Naive thymus-derived CD4-positive, alpha-beta T cell (primary cell): ENCODE measurements at regions of chr6 and their contacts with region 1.

Region 1: GRCh38 chr6:12289933-12290820 is at the start of gene EDN1:
- DNase-seq: peak in 8 of 9 donors; percentile 16 to 61 (median 40)
- ATAC-seq: peak; percentile 87
- H3K4me3 ChIP-seq: peak within 1 kb of the TSS; percentile 46
- H3K4me3 Mint-ChIP-seq: peak within 1 kb of the TSS; percentile 82 to 96 (median 88)
- H3K27ac ChIP-seq: no peak within 1 kb of the TSS
- H3K27ac Mint-ChIP-seq: peak within 1 kb of the TSS in 1 of 9 donors; percentile 57
- H3K4me1 ChIP-seq: no peaks in the 10 kb centered on the region
- H3K4me1 Mint-ChIP-seq: peaks cover 7 to 22% (median 16%) of the 10 kb centered on the region in 7 donors
- H3K27me3 ChIP-seq: peaks cover 0 to 3% of the 10 kb centered on the region in 2 donors
- H3K27me3 Mint-ChIP-seq: peaks cover 31 to 51% (median 38%) of the 10 kb centered on the region in 5 donors
- total RNA-seq, gene EDN1: 0.17 to 1.7 (median 1.4) TPM

Region 2: DNA sequence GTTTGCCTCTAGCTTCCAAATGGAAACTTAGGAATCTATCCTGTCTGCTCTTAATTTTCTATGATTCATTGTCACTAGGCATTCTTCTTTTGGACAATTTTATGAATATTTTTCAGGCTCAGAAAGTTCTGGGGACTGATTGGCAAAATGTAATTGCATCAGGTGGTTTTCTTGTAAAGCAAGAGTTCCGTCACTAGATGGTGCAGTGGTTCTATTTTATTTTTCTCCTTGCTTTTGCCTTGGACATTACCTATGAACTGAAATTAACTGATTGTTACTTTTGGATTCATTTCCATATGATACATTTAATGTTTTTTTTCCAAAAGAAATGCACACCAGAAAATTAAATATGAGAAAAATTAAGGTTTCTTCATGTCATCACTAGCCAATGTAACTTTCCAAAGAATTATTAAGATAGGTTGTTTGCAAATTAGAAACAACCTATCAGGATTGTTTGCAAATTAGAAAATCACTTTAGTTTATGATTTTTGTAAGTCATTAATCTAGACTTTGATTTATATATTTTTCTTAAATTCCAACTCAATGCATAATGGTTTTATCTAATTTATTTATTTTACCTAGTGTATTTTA is 704.7 kb before region 1 on chr6:
- CTCF ChIA-PET with region 1: no interaction called
- POLR2A ChIA-PET with region 1: no interaction called
- intact Hi-C with region 1: loop called (anchors 1 to 10 kb)
- DNase-seq: peak in 4 of 9 donors; percentile 9 to 23 (median 10)
- ATAC-seq: no peak
- H3K4me3 ChIP-seq: no peak overlapping the region
- H3K4me3 Mint-ChIP-seq: no peak overlapping the region
- H3K27ac ChIP-seq: no peak overlapping the region
- H3K27ac Mint-ChIP-seq: no peak overlapping the region
- H3K4me1 ChIP-seq: no peaks in the 10 kb centered on the region
- H3K4me1 Mint-ChIP-seq: no peaks in the 10 kb centered on the region
- H3K27me3 ChIP-seq: no peaks in the 10 kb centered on the region
- H3K27me3 Mint-ChIP-seq: peaks cover 0 to 19% (median 0%) of the 10 kb centered on the region in 5 donors

Region 3: DNA sequence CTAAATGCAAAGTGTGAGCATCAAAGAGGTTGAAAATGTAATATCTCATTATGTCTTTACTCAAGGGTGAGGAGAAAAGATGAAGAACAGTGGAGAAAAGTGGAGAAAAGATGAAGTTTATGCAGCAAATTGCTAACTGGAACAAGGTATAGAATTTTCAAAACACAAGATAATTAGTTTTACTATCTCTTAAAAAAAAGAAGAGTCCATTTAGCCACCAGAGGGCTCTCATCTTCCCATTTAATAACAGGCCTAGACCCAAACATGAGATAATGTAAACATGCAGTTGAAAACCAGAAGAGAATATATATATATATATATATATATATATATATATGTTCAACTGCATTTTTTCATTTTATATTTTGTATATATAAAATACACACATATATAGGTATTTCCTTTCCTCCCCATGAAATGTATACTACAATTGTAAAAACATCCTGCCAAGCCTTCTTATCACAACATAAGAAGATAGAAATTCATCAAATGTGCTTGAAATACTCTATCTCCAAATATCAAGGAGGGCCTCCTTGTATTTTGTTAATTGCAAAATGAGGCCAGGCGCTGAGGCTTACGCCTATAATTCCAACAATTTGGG is 590.0 kb before region 1 on chr6:
- CTCF ChIA-PET with region 1: interaction called, 3 read pairs
- POLR2A ChIA-PET with region 1: no interaction called
- intact Hi-C with region 1: loop called (anchors 1 kb)
- DNase-seq: peak in 7 of 9 donors; percentile 22 to 63 (median 51)
- ATAC-seq: peak; percentile 60
- H3K4me3 ChIP-seq: no peak overlapping the region
- H3K4me3 Mint-ChIP-seq: no peak overlapping the region
- H3K27ac ChIP-seq: no peak overlapping the region
- H3K27ac Mint-ChIP-seq: peak overlapping the region in 3 of 9 donors; percentile 21 to 66 (median 41)
- H3K4me1 ChIP-seq: peaks cover 0 to 9% of the 10 kb centered on the region in 2 donors
- H3K4me1 Mint-ChIP-seq: peaks cover 10 to 42% (median 35%) of the 10 kb centered on the region in 7 donors
- H3K27me3 ChIP-seq: no peaks in the 10 kb centered on the region
- H3K27me3 Mint-ChIP-seq: no peaks in the 10 kb centered on the region

Region 4: DNA sequence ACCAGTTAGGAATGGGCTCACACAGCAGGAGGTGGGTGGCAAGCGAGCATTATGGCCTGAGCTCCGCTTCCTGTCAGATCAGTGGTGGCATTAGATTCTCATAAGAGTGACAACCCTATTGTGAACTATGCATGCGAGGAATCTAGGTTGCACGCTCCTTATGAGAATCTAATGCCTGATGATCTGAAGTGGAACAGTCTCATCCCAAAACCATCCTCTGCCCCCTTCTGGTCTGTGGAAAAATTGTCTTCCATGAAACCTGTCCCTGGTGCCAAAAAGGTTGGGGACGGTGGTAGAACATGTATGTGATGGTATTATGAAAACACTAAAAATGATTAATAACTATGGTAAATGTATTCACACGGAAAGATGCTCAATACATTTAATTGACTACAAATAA is 377.8 kb before region 1 on chr6:
- CTCF ChIA-PET with region 1: no interaction called
- POLR2A ChIA-PET with region 1: no interaction called
- intact Hi-C with region 1: loop called in 1 of 2 experiments (anchors 5 kb)
- DNase-seq: no peak
- ATAC-seq: no peak
- H3K4me3 ChIP-seq: no peak overlapping the region
- H3K4me3 Mint-ChIP-seq: no peak overlapping the region
- H3K27ac ChIP-seq: no peak overlapping the region
- H3K27ac Mint-ChIP-seq: no peak overlapping the region
- H3K4me1 ChIP-seq: no peaks in the 10 kb centered on the region
- H3K4me1 Mint-ChIP-seq: peaks cover 0 to 3% (median 0%) of the 10 kb centered on the region in 7 donors
- H3K27me3 ChIP-seq: no peaks in the 10 kb centered on the region
- H3K27me3 Mint-ChIP-seq: no peaks in the 10 kb centered on the region

Region 5: DNA sequence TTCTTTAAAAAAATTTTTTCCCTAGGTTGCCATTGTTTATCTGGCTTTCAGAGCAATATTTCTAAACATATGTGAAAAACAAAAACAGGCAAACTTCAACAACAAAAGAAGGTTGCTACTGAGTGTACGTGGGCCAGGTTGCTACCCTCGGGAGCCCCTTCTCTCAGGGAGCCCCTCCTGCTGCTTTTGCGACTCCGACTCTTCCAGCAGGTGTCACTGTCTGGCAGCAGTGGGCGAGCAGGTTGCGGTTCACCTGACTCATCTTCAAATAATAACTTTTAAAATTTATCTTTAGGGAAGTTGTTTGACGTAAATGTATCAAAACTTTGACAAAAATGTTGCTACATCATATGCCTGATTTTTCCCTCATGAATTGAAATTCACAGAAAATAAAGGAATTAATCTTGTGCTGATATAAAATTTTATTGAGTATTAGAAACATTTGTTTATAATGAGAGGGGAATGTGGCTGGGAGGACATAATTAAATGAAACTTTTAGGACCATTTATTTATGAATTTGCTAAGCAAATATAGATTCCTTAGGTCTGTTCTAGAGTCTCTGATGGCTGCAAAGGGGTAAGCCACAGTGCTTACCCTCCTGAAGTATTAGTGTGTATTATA is 139.3 kb before region 1 on chr6:
- CTCF ChIA-PET with region 1: no interaction called
- POLR2A ChIA-PET with region 1: no interaction called
- intact Hi-C with region 1: loop called (anchors 1 kb)
- DNase-seq: peak in 5 of 9 donors; percentile 16 to 45 (median 35)
- ATAC-seq: no peak
- H3K4me3 ChIP-seq: no peak overlapping the region
- H3K4me3 Mint-ChIP-seq: no peak overlapping the region
- H3K27ac ChIP-seq: no peak overlapping the region
- H3K27ac Mint-ChIP-seq: no peak overlapping the region
- H3K4me1 ChIP-seq: no peaks in the 10 kb centered on the region
- H3K4me1 Mint-ChIP-seq: peaks cover 4 to 29% (median 14%) of the 10 kb centered on the region in 7 donors
- H3K27me3 ChIP-seq: no peaks in the 10 kb centered on the region
- H3K27me3 Mint-ChIP-seq: no peaks in the 10 kb centered on the region

Region 6: GRCh38 chr6:12605888-12606345 is 315.7 kb after region 1 on chr6:
- CTCF ChIA-PET with region 1: no interaction called
- POLR2A ChIA-PET with region 1: no interaction called
- intact Hi-C with region 1: loop called (anchors 1 to 5 kb)
- DNase-seq: peak in 5 of 9 donors; percentile 11 to 50 (median 27)
- ATAC-seq: peak; percentile 75
- H3K4me3 ChIP-seq: no peak overlapping the region
- H3K4me3 Mint-ChIP-seq: peak overlapping the region in 1 of 10 donors; percentile 49
- H3K27ac ChIP-seq: no peak overlapping the region
- H3K27ac Mint-ChIP-seq: no peak overlapping the region
- H3K4me1 ChIP-seq: no peaks in the 10 kb centered on the region
- H3K4me1 Mint-ChIP-seq: peaks cover 0 to 12% (median 0%) of the 10 kb centered on the region in 7 donors
- H3K27me3 ChIP-seq: no peaks in the 10 kb centered on the region
- H3K27me3 Mint-ChIP-seq: peaks cover 2 to 39% (median 32%) of the 10 kb centered on the region in 5 donors